ENCODE measurements at regions of chr5 and their contacts with region 1.

Region 1: GRCh38 chr5:135208903-135209721 is 175.1 kb upstream of the PITX1 start:
- DNase-seq: peak; percentile 83 to 91
- ATAC-seq: peak; percentile 86
- H3K4me3 ChIP-seq: no peak overlapping the region
- H3K27ac ChIP-seq: peak overlapping the region; percentile 53 to 89
- H3K4me1 ChIP-seq: peaks cover 0 to 5% of the 10 kb centered on the region in 2 donors
- H3K27me3 ChIP-seq: no peaks in the 10 kb centered on the region

Region 2: GRCh38 chr5:135246923-135247795 is 38.0 kb after region 1 on chr5:
- intact Hi-C with region 1: loop called (anchors 2 to 5 kb)
- DNase-seq: peak in 1 of 2 donors; percentile 63
- ATAC-seq: no peak
- H3K4me3 ChIP-seq: no peak overlapping the region
- H3K27ac ChIP-seq: peak overlapping the region in 1 of 2 donors; percentile 65
- H3K4me1 ChIP-seq: peaks cover 0 to 4% of the 10 kb centered on the region in 2 donors
- H3K27me3 ChIP-seq: no peaks in the 10 kb centered on the region